Naive thymus-derived CD8-positive, alpha-beta T cell (primary cell): ENCODE measurements at regions of chr11 and their contacts with region 1.

Region 1: DNA sequence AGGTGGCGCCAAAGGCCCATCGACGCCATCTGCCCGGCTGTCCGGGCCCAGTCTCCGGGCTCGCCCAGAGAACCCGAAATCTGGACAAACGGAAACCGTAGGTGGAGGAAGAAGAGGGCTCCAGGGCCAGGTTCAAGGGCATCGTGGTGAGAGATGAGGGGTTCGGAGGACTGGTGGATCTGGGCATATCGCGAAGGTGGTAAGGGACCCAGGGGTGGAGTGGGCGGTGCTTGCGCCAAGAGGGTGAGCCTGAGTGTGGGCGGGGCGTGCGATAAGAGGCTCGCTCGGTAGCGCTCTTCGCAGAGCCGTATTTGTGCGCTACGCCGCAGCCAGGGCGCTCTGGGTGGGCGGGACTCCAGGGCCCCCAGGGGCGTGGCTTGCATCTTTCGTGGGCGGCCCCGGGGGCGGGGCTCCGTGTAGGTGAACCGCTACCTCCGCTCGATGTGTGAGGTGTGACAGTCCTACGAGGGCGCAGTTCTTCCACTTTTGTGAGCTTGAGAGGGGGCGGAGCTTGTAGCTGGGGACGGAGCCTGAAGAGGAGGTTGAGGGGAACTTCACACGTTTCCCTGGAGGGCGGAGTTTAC is 4.8 kb downstream of the CD248 start:
- DNase-seq: peak; percentile 95 to 100 (median 100)
- ATAC-seq: peak; percentile 70 to 76
- H3K4me3 Mint-ChIP-seq: peak overlapping the region; percentile 73 to 99 (median 96)
- H3K27ac Mint-ChIP-seq: peak overlapping the region; percentile 92 to 100 (median 99)
- H3K4me1 Mint-ChIP-seq: peaks cover 16 to 28% (median 20%) of the 10 kb centered on the region in 4 donors
- H3K27me3 Mint-ChIP-seq: no peaks in the 10 kb centered on the region

Region 2: GRCh38 chr11:66268283-66268951 is 43.6 kb before region 1 on chr11 and contains the start of gene RAB1B:
- POLR2A ChIA-PET with region 1: interaction called, 19 read pairs
- DNase-seq: peak; percentile 98 to 100 (median 100)
- ATAC-seq: peak; percentile 76 to 80
- H3K4me3 Mint-ChIP-seq: peak within 1 kb of the TSS; percentile 89 to 98 (median 94)
- H3K27ac Mint-ChIP-seq: peak within 1 kb of the TSS; percentile 95 to 100 (median 99)
- H3K4me1 Mint-ChIP-seq: peaks cover 23 to 50% (median 45%) of the 10 kb centered on the region in 4 donors
- H3K27me3 Mint-ChIP-seq: peaks cover 0 to 2% (median 0%) of the 10 kb centered on the region in 5 donors
- polyA plus RNA-seq, gene RAB1B: 13.1 to 16.1 (median 14.0) TPM

Region 3: DNA sequence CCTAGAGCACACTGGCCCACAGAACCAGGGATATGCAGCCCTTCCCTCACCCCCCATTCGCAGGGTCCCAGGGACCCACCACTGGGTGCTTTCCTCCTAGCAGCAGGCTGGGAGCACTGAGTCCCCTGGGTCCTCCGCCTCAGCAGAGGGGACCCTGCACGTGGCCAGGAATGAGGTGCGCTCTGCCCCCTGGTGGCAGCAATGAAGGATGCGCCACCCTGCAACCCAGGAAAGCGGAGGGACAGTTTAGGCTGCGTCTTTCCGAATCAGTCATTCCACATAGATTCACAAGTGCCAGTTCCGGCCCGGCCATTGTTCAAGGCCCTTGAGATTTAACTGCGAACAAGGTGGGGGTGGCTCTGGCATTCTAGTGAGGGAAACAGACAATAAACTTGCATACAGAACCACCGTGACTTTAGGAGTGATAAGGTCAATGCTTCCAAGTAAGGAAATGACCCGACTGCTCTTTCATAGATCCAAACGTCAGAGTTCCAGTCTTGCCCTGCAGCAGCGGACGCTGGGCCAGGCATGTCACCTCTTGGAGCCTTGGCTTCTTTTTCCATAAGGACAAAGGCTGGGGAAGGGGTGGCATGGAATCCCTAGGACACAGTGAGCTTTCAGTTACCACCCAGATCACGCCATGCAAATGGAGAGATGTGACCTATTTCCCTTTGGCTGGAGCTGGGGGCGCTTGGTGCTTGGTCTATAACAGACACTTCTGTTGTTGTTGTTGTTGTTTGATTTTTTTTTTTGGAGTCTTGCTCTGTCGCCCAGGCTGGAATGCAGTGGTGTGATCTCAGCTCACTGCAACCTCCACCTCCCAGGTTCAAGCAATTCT is 16.5 kb after region 1 on chr11:
- POLR2A ChIA-PET with region 1: interaction called, 126 read pairs
- DNase-seq: peak; percentile 70 to 90 (median 80)
- ATAC-seq: peak; percentile 88 to 89
- H3K4me3 Mint-ChIP-seq: peak overlapping the region; percentile 20 to 88 (median 70)
- H3K27ac Mint-ChIP-seq: peak overlapping the region; percentile 85 to 95 (median 91)
- H3K4me1 Mint-ChIP-seq: peaks cover 25 to 48% (median 44%) of the 10 kb centered on the region in 4 donors
- H3K27me3 Mint-ChIP-seq: no peaks in the 10 kb centered on the region

Region 4: GRCh38 chr11:66344550-66345315 is 32.7 kb after region 1 on chr11 and contains the start of gene BRMS1:
- POLR2A ChIA-PET with region 1: interaction called, 82 read pairs
- DNase-seq: peak; percentile 87 to 99 (median 94)
- ATAC-seq: peak; percentile 73 to 79
- H3K4me3 Mint-ChIP-seq: peak within 1 kb of the TSS; percentile 93 to 97 (median 95)
- H3K27ac Mint-ChIP-seq: peak within 1 kb of the TSS; percentile 88 to 99 (median 98)
- H3K4me1 Mint-ChIP-seq: peaks cover 29 to 60% (median 53%) of the 10 kb centered on the region in 4 donors
- H3K27me3 Mint-ChIP-seq: peaks cover 0 to 4% (median 0%) of the 10 kb centered on the region in 5 donors
- polyA plus RNA-seq, gene BRMS1: 61.7 to 65.8 (median 63.6) TPM

Region 5: DNA sequence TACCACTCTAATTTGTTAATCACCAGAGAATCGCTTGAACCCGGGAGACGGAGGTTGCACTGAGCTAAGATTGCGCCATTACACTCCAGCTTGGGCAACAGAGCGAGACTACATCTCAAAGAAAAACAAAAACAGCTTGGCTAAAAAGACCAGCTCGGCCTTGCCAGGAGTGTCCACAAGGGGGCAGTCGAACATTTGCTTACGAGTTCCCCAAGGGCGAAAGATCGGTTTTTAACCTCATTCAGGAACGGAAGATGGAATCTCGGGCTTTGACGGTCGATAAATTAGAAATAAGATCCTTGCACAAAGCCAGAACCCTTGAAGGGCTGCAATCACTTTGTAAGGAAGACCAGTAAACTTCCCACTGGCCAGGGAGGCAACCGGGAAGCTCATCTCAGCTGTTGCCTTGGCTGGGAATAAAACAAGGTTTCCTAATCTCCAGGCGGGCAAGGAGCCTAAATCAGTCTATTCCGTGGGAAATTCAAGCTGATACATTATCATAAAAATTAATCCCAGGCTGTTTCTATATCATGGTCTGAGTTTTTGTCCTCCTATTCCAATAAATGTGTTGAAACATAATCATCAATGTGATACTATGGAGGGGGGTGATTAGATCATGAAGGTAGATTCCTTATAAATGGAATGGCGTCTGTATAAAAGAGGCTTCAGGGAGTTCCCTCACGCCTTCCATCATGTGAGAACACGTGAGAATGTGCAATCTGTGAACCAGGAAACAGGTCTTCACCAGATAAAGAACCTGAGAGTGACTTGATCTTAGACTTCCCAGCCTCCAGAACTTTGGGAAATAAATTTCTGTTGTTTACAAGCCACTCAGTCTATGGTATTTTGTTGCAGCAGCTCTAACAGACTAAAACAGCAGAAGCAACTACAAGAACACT is 74.4 kb after region 1 on chr11:
- POLR2A ChIA-PET with region 1: interaction called, 12 read pairs
- DNase-seq: peak; percentile 63 to 90 (median 78)
- ATAC-seq: peak; percentile 78 to 86
- H3K4me3 Mint-ChIP-seq: peak overlapping the region in 8 of 10 donors; percentile 7 to 71 (median 42)
- H3K27ac Mint-ChIP-seq: peak overlapping the region in 4 of 10 donors; percentile 0 to 17 (median 8)
- H3K4me1 Mint-ChIP-seq: peaks cover 5 to 8% (median 7%) of the 10 kb centered on the region in 4 donors
- H3K27me3 Mint-ChIP-seq: peaks cover 0 to 1% (median 0%) of the 10 kb centered on the region in 5 donors